ENCODE measurements at regions of chr13 and their contacts with region 1.

Region 1: GRCh38 chr13:52194184-52194868 is 34.9 kb upstream of the NEK3 start:
- DNase-seq: peak; percentile 83 to 98 (median 88)

Region 2: DNA sequence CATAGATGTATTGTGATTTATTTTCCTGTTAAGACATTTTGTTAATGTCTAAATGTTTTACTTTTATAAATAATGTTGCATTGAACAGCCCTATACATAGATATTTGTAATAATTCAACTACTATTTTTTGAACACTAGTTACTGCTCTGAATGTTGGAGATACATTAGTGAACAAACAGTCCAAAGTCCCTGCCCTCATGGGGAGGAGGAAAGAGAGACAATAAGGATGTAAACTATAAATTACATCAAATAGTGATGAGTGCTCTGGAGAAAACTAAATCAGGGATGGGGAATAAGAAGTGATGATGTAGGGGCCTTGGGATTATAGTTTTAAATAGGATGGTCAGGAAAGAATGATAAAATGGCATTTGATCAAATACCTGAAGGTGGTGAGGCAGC is 729.2 kb before region 1 on chr13:
- intact Hi-C with region 1: no loop called
- DNase-seq: no peak

Region 3: DNA sequence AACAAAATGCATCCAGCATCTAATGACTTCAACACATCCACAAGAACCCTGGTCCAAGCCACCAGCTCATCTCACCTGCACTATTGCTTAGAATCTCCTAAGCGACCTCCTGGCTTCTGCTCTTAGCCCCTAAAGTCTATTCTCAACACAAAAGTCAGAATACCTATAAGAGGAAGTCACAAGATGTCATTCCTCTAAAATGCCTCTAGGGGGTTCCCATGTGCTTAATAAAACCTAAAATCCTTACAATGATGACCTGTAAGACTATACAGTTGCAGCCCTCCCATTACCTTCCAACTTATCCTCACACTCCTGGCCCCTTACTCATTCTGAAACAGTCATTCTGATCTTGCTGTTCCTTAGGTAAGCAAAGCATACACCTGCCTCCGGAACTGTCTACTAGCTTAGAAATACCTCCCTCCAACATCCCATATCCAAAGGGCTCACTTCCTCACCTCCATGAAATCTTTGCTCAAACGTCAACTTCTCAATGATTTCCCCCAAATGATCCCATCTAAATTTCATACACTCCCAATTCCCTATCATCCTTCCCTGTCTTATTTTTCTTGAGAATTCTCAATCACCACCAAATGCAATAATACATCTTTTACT is 193.1 kb before region 1 on chr13:
- intact Hi-C with region 1: loop called (anchors 2 kb)
- DNase-seq: no peak

Region 4: DNA sequence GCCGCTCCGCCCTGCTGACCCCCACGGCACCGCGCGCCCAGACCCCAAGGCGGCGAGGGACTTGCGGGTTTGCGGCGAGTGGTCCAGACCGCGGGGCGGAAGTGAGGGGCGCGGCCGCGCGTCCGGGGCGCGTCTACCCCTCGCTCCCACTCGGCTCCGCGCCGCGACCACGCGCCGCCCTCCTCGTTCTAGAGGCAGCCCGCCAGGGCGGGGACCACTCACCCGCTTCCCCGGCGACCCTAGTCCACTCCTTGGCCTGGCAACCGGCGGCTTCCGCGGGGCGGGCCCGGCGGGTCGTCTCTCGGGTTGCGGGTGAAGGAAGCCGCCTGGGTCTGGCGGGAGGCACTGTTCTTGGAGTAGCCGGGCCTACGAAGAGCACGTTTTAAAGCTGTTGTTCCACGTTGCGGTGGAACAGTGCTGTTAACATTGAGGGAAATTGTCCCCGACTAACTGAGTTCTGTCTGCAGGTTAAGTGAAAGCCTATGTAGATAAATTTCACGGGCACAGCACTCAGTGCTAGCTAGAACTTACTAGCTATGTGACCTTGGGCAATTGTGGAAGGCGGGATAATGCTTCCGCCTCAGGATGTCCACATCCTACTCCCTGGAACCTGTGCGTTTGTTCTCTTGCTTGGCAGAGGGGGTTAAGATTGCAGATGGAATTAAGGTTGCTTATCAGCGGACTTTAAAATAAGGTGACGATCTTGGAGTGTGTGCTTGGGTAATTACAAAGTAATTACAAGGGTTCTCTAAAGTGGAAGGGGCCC is 34.8 kb before region 1 on chr13 and contains the start of gene NEK3:
- intact Hi-C with region 1: loop called (anchors 5 kb)
- DNase-seq: peak; percentile 28 to 96 (median 70)